AG04450 (cell line): ENCODE measurements at regions of chr4 and their contacts with region 1.

Region 1: DNA sequence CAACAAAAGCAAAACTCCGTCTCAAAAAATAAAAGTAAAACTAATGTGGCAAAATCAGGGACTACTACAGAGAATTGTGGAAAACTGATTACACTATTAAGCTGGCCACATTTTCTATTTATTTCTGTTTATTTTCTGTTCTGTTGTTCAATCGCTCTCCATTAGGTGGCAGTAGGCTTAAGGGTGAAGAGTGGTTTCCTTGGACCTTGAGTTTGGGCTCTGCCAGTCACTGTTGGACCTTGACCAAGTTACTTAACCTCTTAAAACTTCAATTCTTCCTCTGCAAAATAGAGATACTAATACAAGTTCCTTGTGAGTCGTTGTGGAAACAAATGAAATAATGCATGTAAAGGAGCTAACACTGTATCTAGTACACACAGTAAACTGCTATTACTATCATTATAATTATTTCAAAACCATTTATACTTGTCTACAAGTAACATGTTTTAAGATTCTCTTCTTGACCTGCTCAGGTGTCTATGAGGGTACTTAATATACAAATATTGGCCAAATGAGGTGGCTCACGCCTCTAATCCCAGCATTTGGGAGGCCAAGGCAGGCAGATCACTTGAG is 15.2 kb downstream of the HSD17B11 start:
- DNase-seq: peak; percentile 76
- H3K4me3 ChIP-seq: no peak overlapping the region
- H3K27ac ChIP-seq: peak overlapping the region; percentile 3
- H3K27me3 ChIP-seq: no peaks in the 10 kb centered on the region
- CTCF ChIP-seq: peak; percentile 82

Region 2: GRCh38 chr4:86685401-86685800 is 690.4 kb before region 1 on chr4:
- CTCF ChIA-PET with region 1: no interaction called
- POLR2A ChIA-PET with region 1: no interaction called
- DNase-seq: no peak
- H3K4me3 ChIP-seq: no peak overlapping the region
- H3K27ac ChIP-seq: no peak overlapping the region
- H3K27me3 ChIP-seq: no peaks in the 10 kb centered on the region
- CTCF ChIP-seq: no peak

Region 3: DNA sequence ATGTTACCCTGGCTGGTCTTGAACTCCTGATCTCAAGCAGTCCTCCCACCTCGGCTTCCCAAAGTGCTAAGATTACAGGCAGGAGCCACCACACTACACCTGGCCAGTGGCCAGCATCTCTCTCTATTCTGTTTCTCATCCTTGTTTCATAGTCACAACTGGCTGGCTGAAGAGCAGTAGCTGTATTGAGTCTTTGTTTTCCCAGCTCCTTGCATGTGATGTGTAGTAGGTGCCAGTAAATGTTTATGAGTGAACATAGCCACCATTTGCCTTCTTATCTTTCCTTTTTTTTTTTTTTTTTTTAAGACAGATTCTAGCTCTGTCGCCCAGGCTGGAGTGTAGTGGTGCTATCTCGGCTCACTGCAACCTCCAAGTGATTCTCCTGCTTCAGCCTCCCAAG is 70.2 kb after region 1 on chr4:
- CTCF ChIA-PET with region 1: interaction called, 12 read pairs
- POLR2A ChIA-PET with region 1: interaction called, 3 read pairs
- DNase-seq: no peak
- H3K4me3 ChIP-seq: no peak overlapping the region
- H3K27ac ChIP-seq: no peak overlapping the region
- H3K27me3 ChIP-seq: no peaks in the 10 kb centered on the region
- CTCF ChIP-seq: no peak

Region 4: DNA sequence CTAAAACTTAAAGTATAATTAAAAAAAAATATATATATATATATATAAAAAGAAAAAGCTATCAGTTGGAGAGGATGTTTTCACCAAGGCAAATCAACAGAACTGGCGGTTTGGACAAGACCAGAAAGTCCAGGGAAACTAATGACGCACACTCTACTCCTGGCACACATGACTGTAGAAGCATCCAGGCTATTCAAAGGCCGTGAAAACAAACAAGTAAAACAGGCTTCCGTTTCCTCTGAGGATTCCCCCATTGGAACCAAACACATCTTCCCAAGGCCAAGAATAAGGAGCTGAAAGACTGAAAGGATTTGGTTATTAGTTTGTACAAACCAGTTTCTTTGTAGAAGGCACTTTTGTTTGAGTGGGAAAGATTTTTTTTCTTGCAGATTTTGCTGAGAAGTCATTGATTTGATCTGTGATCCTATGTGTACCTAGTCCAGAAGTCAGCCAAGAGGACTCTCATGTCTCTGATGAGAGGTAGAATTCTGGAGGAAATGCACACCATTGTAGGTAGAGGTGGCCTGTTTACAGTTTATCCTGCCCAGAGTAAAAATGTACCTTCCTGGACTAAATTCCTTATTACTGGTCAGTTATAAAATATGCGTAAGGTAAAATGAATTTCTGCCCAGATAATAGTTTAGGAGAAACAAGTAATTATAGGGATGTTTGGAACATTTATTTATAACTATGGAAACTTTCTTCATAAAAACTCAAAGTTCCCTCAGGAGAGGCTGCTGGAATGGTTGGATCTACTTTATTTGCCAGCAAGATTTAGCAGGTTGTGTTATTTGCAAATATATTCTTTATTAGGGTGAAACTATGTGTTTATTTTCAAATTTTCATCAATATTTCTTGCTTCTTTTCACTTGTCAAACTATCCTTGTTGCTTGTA is 340.8 kb after region 1 on chr4:
- CTCF ChIA-PET with region 1: no interaction called
- POLR2A ChIA-PET with region 1: no interaction called
- DNase-seq: no peak
- H3K4me3 ChIP-seq: no peak overlapping the region
- H3K27ac ChIP-seq: no peak overlapping the region
- H3K27me3 ChIP-seq: no peaks in the 10 kb centered on the region
- CTCF ChIP-seq: no peak